ENCODE measurements at regions of chr7 and their contacts with region 1.

Region 1: GRCh38 chr7:5494683-5495561 is 71.3 kb upstream of the TNRC18 start:
- DNase-seq: peak; percentile 76 to 85 (median 82)
- H3K4me3 ChIP-seq: peak overlapping the region in 4 of 7 experiments; percentile 25 to 59 (median 36)
- H3K27ac ChIP-seq: no peak overlapping the region
- H3K4me1 ChIP-seq: peaks cover 0 to 52% (median 44%) of the 10 kb centered on the region in 4 experiments
- H3K27me3 ChIP-seq: no peaks in the 10 kb centered on the region

Region 2: GRCh38 chr7:5541087-5541992 is 46.4 kb after region 1 on chr7:
- CTCF ChIA-PET with region 1: no interaction called
- POLR2A ChIA-PET with region 1: no interaction called
- DNase-seq: no peak
- H3K4me3 ChIP-seq: no peak overlapping the region
- H3K27ac ChIP-seq: no peak overlapping the region
- H3K4me1 ChIP-seq: peaks cover 0 to 22% (median 15%) of the 10 kb centered on the region in 4 experiments
- H3K27me3 ChIP-seq: no peaks in the 10 kb centered on the region

Region 3: GRCh38 chr7:5557920-5558401 is 63.0 kb after region 1 on chr7:
- CTCF ChIA-PET with region 1: interaction called, 75 read pairs
- POLR2A ChIA-PET with region 1: interaction called, 3 read pairs
- DNase-seq: peak in 1 of 3 donors; percentile 23
- H3K4me3 ChIP-seq: peak overlapping the region in 6 of 7 experiments; percentile 35 to 67 (median 50)
- H3K27ac ChIP-seq: peak overlapping the region in 1 of 2 experiments; percentile 82
- H3K4me1 ChIP-seq: peaks cover 9 to 57% (median 52%) of the 10 kb centered on the region in 4 experiments
- H3K27me3 ChIP-seq: peaks cover 0 to 4% (median 0%) of the 10 kb centered on the region in 5 experiments

Region 4: DNA sequence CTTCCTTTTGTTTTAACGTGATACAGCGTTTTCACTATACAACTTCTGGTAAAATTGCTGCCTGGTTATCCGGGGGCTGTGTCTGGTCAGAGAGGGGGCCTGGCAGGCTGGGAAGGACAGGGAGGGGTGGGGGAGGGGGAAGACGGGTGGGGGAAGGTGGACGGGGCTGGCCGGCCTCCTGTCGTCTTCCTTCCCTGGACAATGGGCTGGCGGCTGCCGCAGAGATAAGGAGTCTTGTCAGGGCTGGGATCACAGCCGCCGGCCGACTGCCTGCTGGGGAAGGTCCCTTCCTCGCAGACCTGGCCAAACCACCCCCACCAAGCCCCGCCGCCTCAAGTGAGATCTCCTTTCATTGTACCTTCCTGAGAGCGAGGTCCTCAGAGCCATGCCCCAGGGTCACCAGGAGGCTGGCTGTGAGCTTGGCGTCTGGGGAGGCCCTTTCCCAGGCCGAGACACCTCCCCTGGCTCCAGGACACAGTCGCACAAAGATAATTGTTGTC is 79.9 kb after region 1 on chr7:
- CTCF ChIA-PET with region 1: no interaction called
- POLR2A ChIA-PET with region 1: no interaction called
- DNase-seq: no peak
- H3K4me3 ChIP-seq: peak overlapping the region in 4 of 7 experiments; percentile 19 to 55 (median 36)
- H3K27ac ChIP-seq: peak overlapping the region in 1 of 2 experiments; percentile 76
- H3K4me1 ChIP-seq: peaks cover 0 to 24% (median 20%) of the 10 kb centered on the region in 4 experiments
- H3K27me3 ChIP-seq: no peaks in the 10 kb centered on the region

Region 5: GRCh38 chr7:5704534-5704922 is 209.6 kb after region 1 on chr7:
- CTCF ChIA-PET with region 1: interaction called, 36 read pairs
- POLR2A ChIA-PET with region 1: no interaction called
- DNase-seq: peak; percentile 84 to 91 (median 86)
- H3K4me3 ChIP-seq: no peak overlapping the region
- H3K27ac ChIP-seq: no peak overlapping the region
- H3K4me1 ChIP-seq: peaks cover 4 to 23% (median 12%) of the 10 kb centered on the region in 4 experiments
- H3K27me3 ChIP-seq: no peaks in the 10 kb centered on the region